ENCODE measurements at regions of chr13 and their contacts with region 1.

Region 1: DNA sequence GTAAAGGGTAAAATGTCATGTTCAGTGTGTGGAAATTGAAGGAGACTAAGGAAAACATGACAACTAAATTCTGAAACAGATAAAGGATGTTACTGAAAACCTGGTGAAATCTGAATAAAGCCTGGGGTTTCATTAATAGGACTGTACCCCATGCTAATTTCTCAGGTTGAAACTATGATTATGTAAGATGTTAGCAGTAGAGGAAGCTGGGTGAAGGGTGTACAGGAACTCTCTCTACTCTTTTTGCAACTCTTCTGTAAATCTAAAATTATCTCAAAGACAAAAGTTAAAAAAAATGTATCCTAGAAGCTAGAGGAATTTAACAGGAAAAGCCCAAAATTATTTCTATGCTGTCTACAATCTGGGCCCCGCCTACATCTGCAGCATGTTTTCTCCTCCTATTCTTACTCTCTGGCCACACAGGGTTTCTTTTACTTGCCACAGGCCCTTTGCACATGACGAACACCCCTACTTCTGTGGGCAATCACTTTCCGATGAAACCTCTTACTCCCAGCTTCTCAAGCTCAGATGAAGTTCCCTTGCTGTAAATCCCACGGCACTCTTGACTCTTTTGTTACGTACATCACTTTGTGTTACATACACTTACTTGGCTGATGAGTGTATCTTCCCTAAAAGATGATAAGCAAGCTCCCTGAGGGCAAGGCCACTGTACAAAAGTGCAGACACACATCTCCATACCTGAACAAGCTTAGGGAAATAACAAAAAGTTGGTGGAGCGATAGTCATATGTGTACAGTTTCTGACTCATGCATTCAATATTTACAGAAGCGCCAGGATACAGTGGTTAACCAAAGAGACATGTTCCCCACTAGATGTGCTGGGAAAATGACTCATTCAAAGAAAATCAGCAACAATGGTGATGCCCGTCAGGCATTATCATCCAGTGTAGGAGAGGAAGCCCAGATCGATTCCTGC is 32.6 kb downstream of the RUBCNL start:
- DNase-seq: peak in 1 of 9 donors; percentile 30
- ATAC-seq: peak; percentile 85
- H3K4me3 ChIP-seq: no peak overlapping the region
- H3K4me3 Mint-ChIP-seq: peak overlapping the region in 1 of 10 donors; percentile 18
- H3K27ac ChIP-seq: no peak overlapping the region
- H3K27ac Mint-ChIP-seq: peak overlapping the region in 4 of 9 donors; percentile 11 to 86 (median 77)
- H3K4me1 ChIP-seq: no peaks in the 10 kb centered on the region
- H3K4me1 Mint-ChIP-seq: peaks cover 5 to 7% (median 6%) of the 10 kb centered on the region in 7 donors
- H3K27me3 ChIP-seq: no peaks in the 10 kb centered on the region
- H3K27me3 Mint-ChIP-seq: no peaks in the 10 kb centered on the region

Region 2: DNA sequence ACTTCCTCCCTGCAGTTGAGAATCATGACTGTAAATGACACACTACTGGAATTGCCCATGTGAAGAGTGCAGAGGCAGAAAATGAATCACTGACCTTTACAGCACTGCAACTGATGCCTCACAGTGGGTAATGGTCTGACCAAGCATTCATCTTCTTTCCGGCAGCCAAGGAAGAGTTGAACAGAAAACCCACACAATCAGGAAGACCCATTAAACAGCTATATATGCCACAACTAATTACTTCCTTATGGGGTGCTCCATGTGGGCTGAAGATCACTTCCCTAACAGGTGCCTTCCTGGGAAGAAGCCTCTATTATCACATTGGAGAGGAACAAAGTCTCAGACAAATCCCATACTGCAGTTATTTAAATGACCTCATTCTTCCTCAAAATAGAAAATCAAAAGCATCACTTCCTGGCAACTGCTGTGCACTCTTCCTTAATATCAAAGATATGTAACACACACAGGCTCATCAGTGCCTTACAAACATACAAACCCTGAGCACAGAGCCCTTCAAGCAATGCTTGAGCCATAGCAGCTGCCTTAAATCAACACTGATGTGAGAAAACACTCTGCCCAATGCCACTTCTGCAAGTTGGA is 13.2 kb before region 1 on chr13:
- CTCF ChIA-PET with region 1: no interaction called
- POLR2A ChIA-PET with region 1: no interaction called
- intact Hi-C with region 1: loop called in 1 of 2 experiments (anchors 2 kb)
- DNase-seq: peak in 3 of 9 donors; percentile 13 to 33 (median 16)
- ATAC-seq: peak; percentile 85
- H3K4me3 ChIP-seq: no peak overlapping the region
- H3K4me3 Mint-ChIP-seq: peak overlapping the region in 5 of 10 donors; percentile 10 to 37 (median 17)
- H3K27ac ChIP-seq: peak overlapping the region; percentile 17
- H3K27ac Mint-ChIP-seq: peak overlapping the region; percentile 35 to 89 (median 72)
- H3K4me1 ChIP-seq: peaks cover 0 to 18% of the 10 kb centered on the region in 2 donors
- H3K4me1 Mint-ChIP-seq: peaks cover 16 to 34% (median 29%) of the 10 kb centered on the region in 7 donors
- H3K27me3 ChIP-seq: no peaks in the 10 kb centered on the region
- H3K27me3 Mint-ChIP-seq: peaks cover 0 to 1% (median 0%) of the 10 kb centered on the region in 5 donors

Region 3: DNA sequence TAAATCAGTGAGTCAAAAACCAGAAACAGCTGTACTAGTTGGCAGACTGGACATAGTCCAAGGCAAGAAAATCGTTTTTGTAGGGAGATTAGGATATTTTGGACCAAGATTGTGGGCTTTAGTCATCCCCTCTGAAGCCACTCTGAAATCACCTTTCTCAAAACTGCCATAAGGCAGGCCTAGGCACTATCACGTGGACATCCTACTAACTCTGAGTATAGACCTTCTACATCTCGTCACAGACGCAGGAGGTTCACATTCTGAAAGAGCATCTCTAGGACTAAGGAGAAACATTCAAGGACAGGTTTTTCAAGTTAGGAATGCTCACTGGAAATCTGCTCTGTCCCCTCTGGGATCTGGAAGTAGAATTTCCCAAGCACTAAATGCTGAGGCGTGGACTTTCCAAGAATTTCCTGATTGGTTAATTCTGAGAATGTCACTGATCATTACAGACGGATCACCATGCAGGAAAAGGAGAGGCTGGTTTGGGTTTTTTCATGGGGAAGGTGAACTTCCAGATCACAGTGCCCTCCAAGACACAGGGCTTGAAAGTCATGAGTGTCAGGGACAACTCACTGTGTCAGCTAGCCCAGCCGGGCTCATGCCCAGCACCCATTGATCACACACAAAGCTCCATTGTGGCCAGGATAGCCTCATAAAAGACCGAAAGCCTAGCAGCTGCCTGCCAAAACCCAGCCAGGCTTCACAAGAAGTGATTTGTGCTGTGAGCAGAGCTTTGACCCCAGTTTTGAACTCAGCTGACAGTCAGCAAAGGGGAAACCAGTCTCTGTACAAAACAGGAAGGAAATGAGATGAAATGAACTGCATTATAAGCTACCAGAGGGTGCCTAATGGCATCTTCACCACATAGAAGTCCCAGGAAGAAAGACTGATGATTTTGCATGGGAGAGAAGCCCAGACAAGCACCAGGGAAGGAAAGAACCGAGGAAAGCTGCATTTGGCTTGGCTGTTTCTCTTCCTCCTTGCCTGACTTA is 35.3 kb after region 1 on chr13:
- CTCF ChIA-PET with region 1: no interaction called
- POLR2A ChIA-PET with region 1: no interaction called
- intact Hi-C with region 1: loop called in 1 of 2 experiments (anchors 5 kb)
- DNase-seq: peak in 5 of 9 donors; percentile 17 to 33 (median 31)
- ATAC-seq: peak; percentile 80
- H3K4me3 ChIP-seq: no peak overlapping the region
- H3K4me3 Mint-ChIP-seq: peak overlapping the region in 9 of 10 donors; percentile 1 to 64 (median 20)
- H3K27ac ChIP-seq: no peak overlapping the region
- H3K27ac Mint-ChIP-seq: peak overlapping the region; percentile 1 to 76 (median 46)
- H3K4me1 ChIP-seq: peaks cover 4 to 20% of the 10 kb centered on the region in 2 donors
- H3K4me1 Mint-ChIP-seq: peaks cover 15 to 41% (median 27%) of the 10 kb centered on the region in 7 donors
- H3K27me3 ChIP-seq: peaks cover 0 to 4% of the 10 kb centered on the region in 2 donors
- H3K27me3 Mint-ChIP-seq: peaks cover 23 to 30% (median 26%) of the 10 kb centered on the region in 5 donors

Measured in naive thymus-derived CD4-positive, alpha-beta T cell (primary cell).